ACHN (cell line): ENCODE measurements at regions of chr17 and their contacts with region 1.

Region 1: DNA sequence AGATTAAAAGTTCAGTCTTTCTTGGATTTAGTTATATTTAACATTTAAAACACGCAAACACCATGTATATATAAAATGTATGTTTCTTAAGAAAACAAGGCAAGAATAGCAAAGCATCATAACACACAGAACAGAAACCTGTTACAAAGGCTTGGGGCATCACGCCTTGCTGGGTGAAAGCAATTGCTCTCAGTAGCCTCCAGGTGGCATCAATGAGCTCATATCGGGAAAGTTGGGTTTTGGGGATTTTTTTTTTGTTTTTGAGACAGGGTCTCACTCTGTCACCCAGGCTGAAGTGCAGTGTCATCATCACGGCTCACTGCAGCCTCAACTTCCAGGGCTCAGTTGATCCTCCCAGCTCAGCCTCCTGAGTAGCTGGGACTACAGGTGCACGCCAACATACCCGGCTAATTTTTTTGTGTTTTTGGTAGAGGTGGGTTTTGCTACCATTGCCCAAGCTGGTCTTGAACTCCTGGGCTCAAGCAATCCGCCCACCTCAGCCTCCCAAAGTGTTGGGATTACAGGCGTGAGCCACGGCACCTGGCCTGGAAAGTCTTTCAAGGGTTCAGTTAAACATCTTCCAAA is 56.9 kb downstream of the CYB5D2 start:
- DNase-seq: peak; percentile 55

Region 2: GRCh38 chr17:4249452-4250029 is 49.6 kb after region 1 on chr17:
- in situ Hi-C with region 1: no loop called
- DNase-seq: peak; percentile 62

Region 3: DNA sequence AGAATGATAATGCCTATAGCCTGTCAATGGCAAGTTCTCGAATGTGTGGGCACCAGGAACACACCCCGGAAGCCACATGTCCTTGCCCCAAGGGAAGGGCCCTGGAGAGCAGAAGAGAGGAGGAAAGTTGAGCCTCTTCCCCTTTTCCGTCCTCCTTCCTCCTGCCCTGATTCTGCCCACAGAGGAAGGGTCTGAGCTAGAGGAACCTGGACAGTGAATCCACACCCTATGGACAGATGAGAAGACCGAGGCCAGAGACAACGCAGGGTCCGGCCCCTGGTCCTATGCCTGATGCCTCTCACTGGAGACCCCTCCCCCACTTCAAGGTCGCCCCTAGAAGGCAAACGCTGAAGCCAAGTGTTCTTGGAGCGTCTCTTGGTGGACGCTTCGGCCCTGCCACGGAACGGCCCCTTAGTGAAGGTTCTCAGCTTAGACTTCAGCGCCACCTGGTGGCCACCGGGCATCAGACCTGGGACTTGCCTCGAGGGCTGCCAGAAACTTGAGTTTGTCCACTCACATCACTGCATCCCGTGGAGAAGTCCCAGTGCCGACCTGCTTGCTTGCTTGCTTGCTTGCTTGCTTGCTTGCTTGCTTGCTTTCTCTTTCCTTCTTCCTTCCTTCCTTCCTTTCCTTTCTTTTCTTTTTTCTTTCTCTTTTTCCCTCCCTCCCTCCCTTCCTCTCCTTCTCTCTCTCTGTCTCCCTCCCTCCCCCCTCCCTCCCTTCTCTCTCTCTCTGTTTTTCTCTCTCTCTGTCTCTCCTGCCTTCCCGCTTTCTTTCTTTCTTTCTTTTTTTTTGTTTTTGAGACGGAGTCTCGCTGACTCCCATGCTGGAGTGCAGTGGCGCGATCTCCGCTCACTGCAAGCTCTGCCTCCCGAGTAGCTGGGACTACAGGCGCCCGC is 213.3 kb after region 1 on chr17:
- in situ Hi-C with region 1: loop called (anchors 25 kb)
- DNase-seq: peak; percentile 87